MCF 10A (cell line): ENCODE measurements at regions of chr12 and their contacts with region 1.

Region 1: DNA sequence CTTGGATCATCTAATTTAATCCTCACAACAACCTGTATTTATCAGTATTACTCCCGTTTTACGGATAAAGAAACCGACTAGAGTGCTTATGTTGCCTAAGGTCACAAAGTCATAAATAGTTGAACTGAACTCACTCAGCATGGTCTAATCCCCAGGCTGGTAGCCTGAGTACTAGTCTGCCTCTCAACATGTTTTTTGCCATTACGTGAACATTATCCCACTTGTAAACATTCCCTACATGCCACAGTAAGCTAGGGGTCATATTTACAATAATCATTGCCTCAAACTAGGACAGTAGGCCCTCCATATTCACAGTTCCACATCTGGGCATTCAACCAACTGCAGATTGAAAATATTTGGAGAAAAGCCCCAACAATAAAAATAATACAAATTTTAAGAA is 12.1 kb downstream of the SNRPF start:
- DNase-seq: no peak
- H3K4me3 Mint-ChIP-seq: no peak overlapping the region
- H3K27ac Mint-ChIP-seq: no peak overlapping the region
- H3K4me1 Mint-ChIP-seq: no peaks in the 10 kb centered on the region
- H3K27me3 Mint-ChIP-seq: no peaks in the 10 kb centered on the region
- CTCF ChIP-seq: no peak

Region 2: GRCh38 chr12:95858479-95859343 is 12.2 kb before region 1 on chr12 and contains the start of gene SNRPF:
- CTCF ChIA-PET with region 1: no interaction called
- POLR2A ChIA-PET with region 1: interaction called, 12 read pairs
- intact Hi-C with region 1: no loop called
- DNase-seq: peak; percentile 98
- H3K4me3 Mint-ChIP-seq: no peak within 1 kb of the TSS
- H3K27ac Mint-ChIP-seq: no peak within 1 kb of the TSS
- H3K4me1 Mint-ChIP-seq: no peaks in the 10 kb centered on the region
- H3K27me3 Mint-ChIP-seq: peaks cover 14% of the 10 kb centered on the region
- CTCF ChIP-seq: no peak
- total RNA-seq, gene SNRPF: 45.0 and 46.9 TPM in 2 replicates